ENCODE measurements at regions of chr9 and their contacts with region 1.

Region 1: DNA sequence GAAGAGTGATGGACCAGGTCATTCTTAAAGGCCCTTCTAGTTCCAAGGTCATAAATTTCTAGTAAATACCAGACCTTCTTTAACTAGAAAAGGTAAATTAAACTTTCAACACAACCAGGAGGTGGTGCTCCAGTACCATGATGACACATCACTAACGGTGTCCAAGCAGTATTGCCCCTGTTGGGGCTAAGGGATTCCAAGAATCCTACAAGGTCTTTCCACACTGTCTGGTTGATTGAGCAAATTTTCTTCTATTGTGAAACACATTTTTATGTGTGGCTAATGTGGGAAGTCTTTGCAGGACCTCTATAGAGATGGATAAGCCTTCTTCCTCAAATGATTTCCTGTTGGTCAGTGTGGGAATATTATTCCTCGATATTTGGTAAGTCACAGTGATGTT is 459.6 kb upstream of the PAPPA start:
- DNase-seq: peak; percentile 61
- ATAC-seq: no peak; the same call in 1 of the 2 replicates
- H3K4me3 ChIP-seq: no peak overlapping the region
- H3K27ac ChIP-seq: no peak overlapping the region
- H3K4me1 ChIP-seq: peaks cover 21% of the 10 kb centered on the region
- H3K27me3 ChIP-seq: no peaks in the 10 kb centered on the region
- CTCF ChIP-seq: peak; percentile 65

Region 2: GRCh38 chr9:115864581-115864980 is 170.6 kb after region 1 on chr9:
- CTCF ChIA-PET with region 1: no interaction called
- POLR2A ChIA-PET with region 1: no interaction called
- intact Hi-C with region 1: loop called (anchors 5 kb)
- DNase-seq: no peak
- ATAC-seq: no peak
- H3K4me3 ChIP-seq: no peak overlapping the region
- H3K27ac ChIP-seq: no peak overlapping the region
- H3K4me1 ChIP-seq: no peaks in the 10 kb centered on the region
- H3K27me3 ChIP-seq: 0 out of 2 replicates have a peak, but pooled peaks cover 4% of the 10 kb centered on the region
- CTCF ChIP-seq: no peak

Region 3: GRCh38 chr9:116149844-116150243 is 455.8 kb after region 1 on chr9:
- CTCF ChIA-PET with region 1: no interaction called
- POLR2A ChIA-PET with region 1: no interaction called
- intact Hi-C with region 1: loop called (anchors 5 kb)
- DNase-seq: peak; percentile 42
- ATAC-seq: no peak
- H3K4me3 ChIP-seq: no peak overlapping the region
- H3K27ac ChIP-seq: no peak overlapping the region
- H3K4me1 ChIP-seq: peaks cover 14% of the 10 kb centered on the region
- H3K27me3 ChIP-seq: no peaks in the 10 kb centered on the region
- CTCF ChIP-seq: peak; percentile 66

Measured in PC-3 (cell line).